K562 (cell line): ENCODE measurements at regions of chrX and their contacts with region 1.

Region 1: DNA sequence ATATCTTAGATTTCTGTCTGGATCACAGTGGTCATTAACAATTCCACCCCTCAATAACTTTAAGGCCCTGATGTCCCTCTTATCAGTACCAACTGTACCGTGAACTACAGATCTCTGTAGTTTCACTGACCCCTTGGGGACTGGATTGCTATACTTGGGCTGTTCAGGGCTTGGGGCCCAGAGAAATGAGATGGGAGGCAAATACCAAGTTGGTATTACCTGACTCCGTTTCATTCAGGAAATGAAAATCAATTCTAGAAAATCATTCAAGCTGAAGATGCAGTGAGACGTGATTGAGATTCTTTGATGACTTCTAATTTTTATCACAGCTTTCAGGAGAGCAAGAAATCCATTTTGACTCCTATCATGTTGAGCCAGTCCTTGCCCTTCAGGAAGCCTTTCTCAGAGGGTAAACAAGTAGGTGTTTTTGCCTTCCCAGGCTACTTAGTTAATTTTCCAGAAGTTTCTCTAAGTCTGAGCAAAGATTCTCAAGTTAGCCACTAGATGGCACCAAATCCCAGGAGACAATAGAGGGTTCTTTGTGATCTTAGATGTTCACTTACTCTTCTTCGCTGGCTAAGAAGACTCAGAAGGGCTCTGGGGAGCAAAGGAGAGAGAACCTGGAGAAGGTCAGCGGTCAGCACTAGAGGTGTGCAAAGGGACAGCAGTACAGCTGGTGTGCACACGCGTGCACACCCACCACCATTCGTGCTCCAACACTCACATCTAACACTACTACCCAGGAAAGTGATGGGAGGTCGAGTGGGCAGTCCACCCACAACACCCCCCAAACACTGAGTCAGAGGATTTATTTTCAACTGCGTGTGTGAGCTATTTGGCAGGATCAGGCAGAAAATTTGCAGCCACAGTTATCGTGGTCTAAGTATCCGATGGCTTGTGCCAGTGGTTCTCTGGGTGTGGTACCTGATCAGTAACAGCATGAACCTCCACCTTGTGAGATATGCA is 7.4 kb downstream of the HNRNPH2 start:
- DNase-seq: peak; percentile 49 to 72 (median 52)
- ATAC-seq: peak; percentile 84
- H3K4me3 ChIP-seq: no peak overlapping the region
- H3K27ac ChIP-seq: no peak overlapping the region
- H3K4me1 ChIP-seq: peaks cover 8 to 17% of the 10 kb centered on the region in 2 experiments; a peak in 4 of 5 replicates
- H3K27me3 ChIP-seq: no peaks in the 10 kb centered on the region; a peak in 1 of 5 replicates
- CTCF ChIP-seq: peak; percentile 52 to 75 (median 66)
- EP300 ChIP-seq: no peak
- POLR2A ChIP-seq: no peak
- RAD21 ChIP-seq: peak; percentile 53 to 74

Region 2: GRCh38 chrX:101462892-101463291 is 47.4 kb after region 1 on chrX:
- CTCF ChIA-PET with region 1: no interaction called
- POLR2A ChIA-PET with region 1: no interaction called
- in situ Hi-C with region 1: no loop called
- intact Hi-C with region 1: loop called (anchors 5 kb)
- DNase-seq: peak in 2 of 4 experiments; percentile 19 to 21
- ATAC-seq: peak; percentile 78
- H3K4me3 ChIP-seq: no peak overlapping the region
- H3K27ac ChIP-seq: no peak overlapping the region
- H3K4me1 ChIP-seq: no peaks in the 10 kb centered on the region
- H3K27me3 ChIP-seq: no peaks in the 10 kb centered on the region
- CTCF ChIP-seq: peak; percentile 18 to 46 (median 35); a peak in 3 of 6 replicates
- EP300 ChIP-seq: no peak
- POLR2A ChIP-seq: no peak
- RAD21 ChIP-seq: peak in 1 of 2 experiments; percentile 50; a peak in 2 of 4 replicates

Region 3: GRCh38 chrX:101595739-101596419 is 180.4 kb after region 1 on chrX:
- CTCF ChIA-PET with region 1: no interaction called
- POLR2A ChIA-PET with region 1: no interaction called
- in situ Hi-C with region 1: no loop called
- intact Hi-C with region 1: loop called (anchors 5 kb)
- DNase-seq: peak; percentile 18 to 68 (median 32)
- ATAC-seq: peak; percentile 87
- H3K4me3 ChIP-seq: no peak overlapping the region
- H3K27ac ChIP-seq: no peak overlapping the region
- H3K4me1 ChIP-seq: no peaks in the 10 kb centered on the region
- H3K27me3 ChIP-seq: no peaks in the 10 kb centered on the region
- CTCF ChIP-seq: peak; percentile 47 to 77 (median 58); a peak in 5 of 6 replicates
- EP300 ChIP-seq: no peak
- POLR2A ChIP-seq: no peak
- RAD21 ChIP-seq: peak; percentile 66 to 82